MCF 10A (cell line): ENCODE measurements at regions of chr6 and their contacts with region 1.

Region 1: DNA sequence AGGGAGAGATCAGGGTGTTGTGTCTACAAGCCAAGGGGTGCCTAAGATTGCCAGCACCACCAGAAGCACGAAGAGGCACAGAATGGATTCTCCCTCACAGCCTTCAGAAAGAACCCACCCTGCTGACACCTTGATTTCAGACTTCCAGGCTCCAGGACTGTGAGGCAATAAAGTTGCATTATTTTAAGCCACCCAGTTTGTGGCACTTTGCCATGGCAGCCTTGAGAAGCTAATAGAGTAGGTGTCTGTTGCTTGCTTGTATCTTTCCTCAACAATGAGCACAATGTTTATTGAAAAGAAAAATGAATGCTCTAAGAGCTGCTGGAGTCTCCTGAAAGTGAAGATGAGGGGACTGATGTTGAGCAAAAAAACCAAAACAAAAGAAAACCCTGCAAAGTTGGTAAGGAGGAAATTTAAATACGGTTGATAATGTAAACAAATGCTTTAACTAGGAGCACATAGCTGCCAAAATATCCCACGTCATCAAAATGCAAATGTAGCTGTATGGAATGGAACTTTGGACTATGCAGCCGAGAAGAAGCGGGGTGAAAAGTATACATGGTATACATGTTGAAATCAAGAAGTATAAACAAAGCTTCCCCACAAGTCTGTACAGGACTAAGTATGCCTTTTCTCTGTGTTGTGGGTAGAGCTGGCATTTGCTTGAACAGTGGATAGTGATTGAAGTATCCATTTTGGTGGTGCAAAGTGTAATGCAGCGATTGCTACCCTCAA is 8.0 kb downstream of the IL20RA start:
- DNase-seq: peak; percentile 80
- H3K4me3 Mint-ChIP-seq: no peak overlapping the region
- H3K27ac Mint-ChIP-seq: peak overlapping the region; percentile 36
- H3K4me1 Mint-ChIP-seq: peaks cover 16% of the 10 kb centered on the region
- H3K27me3 Mint-ChIP-seq: no peaks in the 10 kb centered on the region
- CTCF ChIP-seq: no peak

Region 2: GRCh38 chr6:136582711-136583471 is 453.8 kb before region 1 on chr6:
- CTCF ChIA-PET with region 1: no interaction called
- POLR2A ChIA-PET with region 1: no interaction called
- intact Hi-C with region 1: no loop called
- DNase-seq: peak; percentile 76
- H3K4me3 Mint-ChIP-seq: no peak overlapping the region
- H3K27ac Mint-ChIP-seq: peak overlapping the region; percentile 96
- H3K4me1 Mint-ChIP-seq: peaks cover 23% of the 10 kb centered on the region
- H3K27me3 Mint-ChIP-seq: no peaks in the 10 kb centered on the region
- CTCF ChIP-seq: peak; percentile 47

Region 3: DNA sequence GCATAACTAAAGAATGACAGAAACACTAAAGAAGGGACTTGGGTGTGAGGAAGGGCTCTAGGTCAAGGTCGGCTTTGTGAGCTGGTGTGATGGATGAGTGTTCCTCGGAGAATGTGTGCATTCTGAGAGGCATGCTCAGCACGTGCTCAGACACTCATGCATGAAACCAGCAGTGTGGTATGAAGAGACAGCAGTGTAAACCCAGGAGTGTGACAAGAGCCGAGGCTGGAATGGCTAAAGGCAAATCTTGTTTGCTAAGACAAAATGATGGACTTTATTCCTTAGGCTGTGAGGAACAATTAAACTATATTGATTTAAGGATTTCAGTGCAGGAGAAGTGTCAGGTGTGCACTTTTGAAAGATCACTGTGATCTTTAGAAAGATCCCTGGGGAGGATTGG is 379.1 kb before region 1 on chr6:
- CTCF ChIA-PET with region 1: no interaction called
- POLR2A ChIA-PET with region 1: no interaction called
- intact Hi-C with region 1: no loop called
- DNase-seq: no peak
- H3K4me3 Mint-ChIP-seq: no peak overlapping the region
- H3K27ac Mint-ChIP-seq: no peak overlapping the region
- H3K4me1 Mint-ChIP-seq: peaks cover 12% of the 10 kb centered on the region
- H3K27me3 Mint-ChIP-seq: no peaks in the 10 kb centered on the region
- CTCF ChIP-seq: no peak

Region 4: GRCh38 chr6:137025786-137026456 is 10.8 kb before region 1 on chr6:
- CTCF ChIA-PET with region 1: interaction called, 4 read pairs
- POLR2A ChIA-PET with region 1: interaction called, 14 read pairs
- intact Hi-C with region 1: no loop called
- DNase-seq: no peak
- H3K4me3 Mint-ChIP-seq: no peak overlapping the region
- H3K27ac Mint-ChIP-seq: peak overlapping the region; percentile 74
- H3K4me1 Mint-ChIP-seq: peaks cover 25% of the 10 kb centered on the region
- H3K27me3 Mint-ChIP-seq: no peaks in the 10 kb centered on the region
- CTCF ChIP-seq: no peak

Region 5: DNA sequence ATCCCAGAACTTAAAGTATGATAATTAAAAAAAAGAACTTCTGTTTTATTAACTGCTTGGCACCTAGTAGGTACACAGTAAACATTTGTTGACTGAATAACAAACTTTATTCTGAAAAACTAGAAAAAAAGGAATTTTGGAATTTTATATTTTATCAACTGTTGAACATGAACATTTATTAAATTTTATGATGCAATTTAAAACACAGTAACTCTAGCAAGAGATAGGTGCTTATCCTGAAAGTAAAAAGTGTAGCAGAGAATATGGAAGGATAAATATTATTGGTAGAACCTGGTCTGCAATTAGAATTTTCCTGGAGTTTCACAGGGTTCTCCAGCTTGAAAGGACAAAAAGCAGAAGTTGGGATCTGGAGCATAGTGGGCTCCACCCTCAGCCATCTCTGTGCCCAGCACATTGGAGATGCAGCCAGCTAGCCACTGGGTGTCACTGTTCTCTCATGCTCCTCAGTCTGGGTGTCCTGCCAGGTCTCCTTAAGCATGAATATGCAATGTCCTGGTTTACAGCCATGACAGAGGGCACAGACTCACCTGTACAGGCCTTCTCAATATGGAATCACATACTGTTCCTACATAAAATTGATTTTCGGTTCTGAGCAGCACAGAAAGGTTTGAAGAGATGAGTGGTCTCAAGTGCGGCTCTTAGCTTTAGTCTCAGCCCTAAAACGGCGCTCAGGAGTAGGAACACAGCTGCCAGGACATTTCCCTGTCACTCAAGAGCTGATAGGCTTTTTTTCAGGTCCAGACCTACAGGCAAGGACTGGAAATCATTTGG is 39.7 kb after region 1 on chr6:
- CTCF ChIA-PET with region 1: no interaction called
- POLR2A ChIA-PET with region 1: no interaction called
- intact Hi-C with region 1: no loop called
- DNase-seq: peak; percentile 86
- H3K4me3 Mint-ChIP-seq: no peak overlapping the region
- H3K27ac Mint-ChIP-seq: no peak overlapping the region
- H3K4me1 Mint-ChIP-seq: no peaks in the 10 kb centered on the region
- H3K27me3 Mint-ChIP-seq: no peaks in the 10 kb centered on the region
- CTCF ChIP-seq: peak; percentile 68